Activated naive CD4-positive, alpha-beta T cell treated with anti-CD3 and anti-CD28 coated beads, Interleukin-2, amount 10 ng/mL, durations not matched to agents 7 days and 5 days (primary cell): ENCODE measurements at regions of chr19 and their contacts with region 1.

Region 1: GRCh38 chr19:46821498-46822409 is 28.9 kb downstream of the AP2S1 start:
- DNase-seq: peak; percentile 78
- H3K4me3 Mint-ChIP-seq: peak overlapping the region; percentile 54
- H3K27ac Mint-ChIP-seq: peak overlapping the region; percentile 90
- H3K4me1 Mint-ChIP-seq: peaks cover 53% of the 10 kb centered on the region
- H3K27me3 Mint-ChIP-seq: peaks cover 10% of the 10 kb centered on the region

Region 2: DNA sequence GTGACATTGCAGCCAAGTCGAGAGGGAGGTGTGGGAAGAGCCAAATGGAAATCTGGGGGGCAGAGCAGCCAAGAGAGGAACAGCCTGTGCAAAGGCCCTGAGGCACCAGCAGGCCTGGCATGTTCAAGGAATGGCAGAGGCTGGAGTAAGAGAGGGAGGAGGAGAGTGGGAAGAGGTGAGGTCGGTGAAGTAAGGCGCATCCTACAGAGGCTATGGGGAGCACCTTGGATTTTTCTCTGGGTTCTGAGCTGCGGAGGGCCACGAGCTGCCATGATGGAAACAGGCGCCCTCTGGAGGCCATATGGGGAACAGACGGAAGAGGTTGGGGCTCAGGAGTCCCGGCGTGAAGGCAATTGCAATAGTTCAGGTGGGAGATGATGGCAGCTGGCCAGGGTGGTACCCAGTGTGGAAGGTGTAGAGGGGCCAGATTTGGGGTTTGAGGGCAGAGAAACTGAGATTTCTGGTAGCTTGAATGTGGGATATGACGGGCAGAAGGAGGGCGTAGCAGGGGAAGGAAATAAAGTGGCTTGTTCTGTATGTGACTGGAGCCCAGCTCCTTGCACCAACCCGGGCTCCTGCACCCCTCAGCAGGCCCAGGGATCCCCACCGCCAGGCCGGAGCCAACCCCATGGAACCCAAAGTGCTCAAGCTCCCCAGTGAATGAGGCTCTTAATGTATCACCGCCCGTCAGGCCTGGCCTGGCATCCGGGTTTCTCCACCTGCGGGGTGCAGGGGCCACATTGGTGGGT is 55.0 kb before region 1 on chr19:
- CTCF ChIA-PET with region 1: interaction called, 10 read pairs
- DNase-seq: peak; percentile 76
- H3K4me3 Mint-ChIP-seq: no peak overlapping the region
- H3K27ac Mint-ChIP-seq: no peak overlapping the region
- H3K4me1 Mint-ChIP-seq: peaks cover 5% of the 10 kb centered on the region
- H3K27me3 Mint-ChIP-seq: peaks cover 4% of the 10 kb centered on the region